Activated CD4-positive, alpha-beta memory T cell treated with anti-CD3 and anti-CD28 coated beads for 36 hours (primary cell): ENCODE measurements at regions of chr15 and their contacts with region 1.

Region 1: DNA sequence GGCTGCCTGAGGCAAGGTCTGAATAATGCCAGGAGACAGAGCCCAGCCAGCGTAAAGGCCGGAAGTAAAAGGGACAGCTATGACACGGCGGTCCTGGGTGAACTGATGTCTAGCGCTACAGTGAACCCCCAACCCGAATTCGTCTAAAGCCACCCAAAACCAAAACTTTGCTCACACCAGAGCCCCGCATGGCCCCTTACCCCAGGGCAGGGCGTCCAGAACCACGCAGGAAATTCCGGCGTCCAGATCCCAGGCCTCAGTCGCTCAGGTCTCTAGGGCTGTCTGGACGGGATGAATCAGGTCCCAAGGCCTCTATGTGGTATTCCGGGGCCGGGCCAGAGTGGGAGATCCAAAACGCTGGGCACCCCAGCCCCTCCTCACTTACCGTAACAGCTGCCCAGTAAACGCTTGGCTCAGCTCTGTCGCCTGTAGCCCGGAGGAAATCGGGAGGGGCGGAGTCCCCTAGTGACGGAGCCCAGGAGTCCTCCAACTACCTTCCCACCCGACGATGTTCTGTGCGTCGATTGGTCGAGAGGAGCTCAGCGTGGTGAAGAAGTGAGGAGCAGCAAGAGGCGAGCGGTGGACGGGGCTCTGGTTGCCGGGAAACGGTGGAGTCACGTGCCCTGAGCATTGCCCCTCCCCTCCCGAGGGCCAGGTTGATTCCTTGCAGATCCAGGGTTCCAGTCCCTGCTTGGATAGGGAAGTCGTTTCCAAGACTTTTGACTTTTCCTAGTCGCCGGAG is at the start of gene CCDC32:
- DNase-seq: peak; percentile 98
- H3K4me3 Mint-ChIP-seq: peak within 1 kb of the TSS; percentile 96
- H3K27ac Mint-ChIP-seq: peak within 1 kb of the TSS; percentile 92
- H3K4me1 Mint-ChIP-seq: peaks cover 48% of the 10 kb centered on the region
- H3K27me3 Mint-ChIP-seq: peaks cover 2% of the 10 kb centered on the region
- total RNA-seq, gene CCDC32: 28.6 to 29.2 TPM

Region 2: DNA sequence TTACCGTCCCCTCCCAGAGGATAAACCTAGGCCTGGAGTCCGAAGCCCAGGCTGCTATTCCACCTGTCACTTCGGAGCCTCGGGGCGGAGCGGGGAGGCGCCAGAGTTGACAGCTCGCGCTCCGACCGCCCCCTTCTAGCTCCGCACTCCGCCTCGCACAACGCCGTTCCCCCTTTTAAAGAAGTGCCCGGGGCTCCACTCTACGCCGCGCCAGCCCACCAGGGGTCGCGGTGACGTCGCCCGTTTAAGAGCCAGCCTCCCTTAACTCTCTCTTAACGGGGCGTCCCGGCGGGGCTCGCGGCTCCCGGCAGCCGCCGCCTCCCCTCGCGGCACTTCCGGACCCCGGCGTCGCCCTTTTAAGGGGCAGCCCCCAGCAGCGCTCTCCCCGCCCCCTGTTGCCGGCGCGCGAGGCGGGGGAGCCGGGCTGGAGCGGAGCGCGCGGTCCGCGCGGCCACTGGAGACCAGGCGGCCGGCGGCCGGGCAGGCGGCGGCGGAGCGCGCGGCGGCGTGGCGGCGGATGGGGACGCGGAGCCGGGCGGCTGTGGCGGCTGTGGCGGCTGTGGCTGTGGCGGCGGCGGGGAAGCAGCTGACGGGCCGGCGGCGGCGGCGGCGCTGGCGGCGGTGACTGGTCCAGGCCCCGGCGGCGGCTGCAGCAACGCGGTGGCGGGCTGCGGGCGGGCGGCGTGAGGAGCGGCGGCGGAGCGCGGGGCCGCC is 241.4 kb before region 1 on chr15 and contains the start of gene INAFM2:
- CTCF ChIA-PET with region 1: no interaction called
- POLR2A ChIA-PET with region 1: no interaction called
- intact Hi-C with region 1: no loop called
- DNase-seq: peak; percentile 88
- H3K4me3 Mint-ChIP-seq: peak within 1 kb of the TSS; percentile 65
- H3K27ac Mint-ChIP-seq: no peak within 1 kb of the TSS
- H3K4me1 Mint-ChIP-seq: peaks cover 18% of the 10 kb centered on the region
- H3K27me3 Mint-ChIP-seq: no peaks in the 10 kb centered on the region
- total RNA-seq, gene INAFM2: 6.7 to 7.4 TPM

Region 3: DNA sequence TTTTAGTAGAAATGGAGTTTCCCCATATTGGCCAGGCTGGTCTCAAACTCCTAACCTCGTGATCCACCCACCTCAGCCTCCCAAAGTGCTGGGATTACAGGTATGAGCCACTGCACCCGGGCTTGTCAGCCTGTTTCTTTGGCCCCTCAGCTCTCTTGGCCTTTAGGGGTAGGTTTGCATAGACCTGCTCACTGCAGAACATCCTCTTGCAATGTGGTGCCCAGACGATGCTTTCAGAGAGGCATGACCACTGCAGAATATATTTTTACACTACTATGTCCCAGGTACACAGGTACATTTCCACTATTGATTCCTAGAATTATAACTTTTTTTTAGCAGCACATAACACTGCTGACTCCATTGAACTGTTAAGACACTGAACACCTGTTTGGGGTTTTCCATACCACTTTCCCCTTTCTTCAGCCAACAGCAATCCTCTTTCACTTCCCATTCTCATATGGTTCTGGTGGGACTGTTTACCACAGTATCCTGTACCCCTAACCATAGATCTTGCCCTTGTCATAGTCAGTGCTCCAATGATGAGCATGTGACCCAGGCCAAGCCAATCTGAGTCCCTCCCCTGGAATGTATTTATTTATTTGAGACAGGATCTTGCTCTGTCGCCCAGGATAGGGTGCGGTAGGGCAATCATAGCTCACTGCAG is 21.0 kb before region 1 on chr15:
- CTCF ChIA-PET with region 1: no interaction called
- POLR2A ChIA-PET with region 1: no interaction called
- intact Hi-C with region 1: no loop called
- DNase-seq: no peak
- H3K4me3 Mint-ChIP-seq: no peak overlapping the region
- H3K27ac Mint-ChIP-seq: no peak overlapping the region
- H3K4me1 Mint-ChIP-seq: no peaks in the 10 kb centered on the region
- H3K27me3 Mint-ChIP-seq: no peaks in the 10 kb centered on the region

Region 4: DNA sequence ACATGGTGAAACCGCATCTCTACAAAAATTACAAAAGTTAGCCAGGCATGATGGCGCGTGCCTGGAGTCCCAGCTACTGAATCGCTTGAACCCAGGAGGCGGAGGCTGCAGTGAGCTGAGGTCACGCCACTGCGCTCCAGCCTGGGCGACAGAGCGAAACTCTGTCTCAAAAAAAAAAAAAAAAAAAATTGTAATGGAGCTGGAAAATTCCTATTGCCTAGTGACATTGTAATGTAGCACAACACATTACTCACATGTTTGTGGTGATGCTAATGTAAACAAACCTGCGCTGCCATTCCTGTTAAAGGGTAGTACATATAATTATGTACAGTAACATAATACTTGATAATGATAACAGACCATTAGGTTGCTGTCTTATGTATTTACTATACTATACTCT is 68.4 kb after region 1 on chr15:
- CTCF ChIA-PET with region 1: no interaction called
- POLR2A ChIA-PET with region 1: no interaction called
- intact Hi-C with region 1: no loop called
- DNase-seq: no peak
- H3K4me3 Mint-ChIP-seq: no peak overlapping the region
- H3K27ac Mint-ChIP-seq: no peak overlapping the region
- H3K4me1 Mint-ChIP-seq: no peaks in the 10 kb centered on the region
- H3K27me3 Mint-ChIP-seq: no peaks in the 10 kb centered on the region

Region 5: GRCh38 chr15:40769274-40770146 is 204.7 kb after region 1 on chr15 and contains the start of gene C15orf62:
- CTCF ChIA-PET with region 1: no interaction called
- POLR2A ChIA-PET with region 1: no interaction called
- intact Hi-C with region 1: loop called (anchors 5 kb)
- DNase-seq: peak; percentile 57
- H3K4me3 Mint-ChIP-seq: no peak within 1 kb of the TSS
- H3K27ac Mint-ChIP-seq: peak within 1 kb of the TSS; percentile 60
- H3K4me1 Mint-ChIP-seq: peaks cover 32% of the 10 kb centered on the region
- H3K27me3 Mint-ChIP-seq: no peaks in the 10 kb centered on the region
- total RNA-seq, gene C15orf62: 0.39 to 0.43 TPM